Left cardiac atrium (tissue), 4 donors: ENCODE measurements at regions of chr1 and their contacts with region 1.

Region 1: DNA sequence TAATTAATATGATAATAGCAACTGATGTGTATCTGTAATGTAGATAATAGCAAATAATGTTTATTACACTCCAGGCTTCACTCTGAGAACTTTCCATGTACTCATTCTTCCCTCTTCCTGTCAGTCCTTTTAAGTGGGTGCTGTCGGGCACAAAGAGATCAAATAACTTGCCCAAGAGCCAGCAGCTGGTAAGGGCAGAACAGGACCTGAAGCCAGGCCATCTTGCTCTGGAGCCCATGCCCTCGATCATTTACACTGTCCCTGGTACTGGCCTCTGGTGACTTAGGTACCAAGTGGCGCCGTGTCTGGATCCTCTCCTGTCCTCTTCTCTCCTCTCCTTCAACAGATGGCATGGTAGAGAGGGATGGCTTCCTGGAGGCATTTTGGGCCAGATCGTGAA is 97.2 kb downstream of the VPS13D start:
- DNase-seq: no peak
- ATAC-seq: no peak

Region 2: DNA sequence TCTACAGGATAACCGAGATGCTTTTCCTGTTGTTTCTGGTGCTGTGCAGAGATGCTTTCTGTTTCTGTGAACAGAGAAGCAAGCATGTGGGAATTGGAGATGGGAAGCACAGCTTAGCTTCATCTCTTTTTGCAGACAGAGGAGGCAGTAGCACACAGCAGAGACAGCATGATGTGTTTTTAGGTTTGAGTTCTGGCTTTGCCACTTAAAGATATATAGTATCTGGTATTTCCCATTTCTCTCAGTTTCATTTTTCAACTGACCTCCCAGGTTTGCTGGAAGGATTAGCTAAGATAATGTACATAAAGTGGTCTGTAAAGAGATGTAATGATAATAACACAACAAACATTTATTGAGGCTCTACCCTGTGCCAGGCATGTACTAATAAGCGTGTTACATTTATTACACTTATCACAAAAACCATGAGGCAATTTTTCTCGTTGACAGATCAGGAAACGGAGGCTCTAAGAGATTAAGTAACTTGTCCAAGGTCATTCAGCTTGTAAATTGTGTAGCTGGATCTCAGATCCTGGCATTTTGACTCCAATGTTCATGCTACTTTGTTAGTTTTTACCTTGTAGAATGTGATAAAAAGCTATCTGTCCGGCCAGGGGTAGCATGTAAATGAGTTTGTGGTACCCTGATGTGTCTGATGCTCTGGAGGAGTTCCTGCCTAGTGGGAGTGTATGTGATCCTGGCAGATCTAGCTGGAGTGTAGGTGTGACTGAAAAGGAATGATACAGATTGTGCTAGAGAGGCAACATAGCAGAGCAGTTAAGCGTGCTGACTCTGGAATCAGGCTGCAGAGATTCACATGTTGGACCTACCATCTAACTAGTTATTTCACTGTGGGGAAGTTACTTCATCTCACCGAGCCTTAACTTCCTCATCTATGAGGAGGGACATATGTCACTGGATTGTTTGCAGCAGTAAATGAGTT is 49.4 kb after region 1 on chr1:
- intact Hi-C with region 1: loop called in 1 of 2 experiments (anchors 10 kb)
- DNase-seq: no peak
- ATAC-seq: peak; percentile 44 to 72